ENCODE measurements at regions of chr2 and their contacts with region 1.

Region 1: DNA sequence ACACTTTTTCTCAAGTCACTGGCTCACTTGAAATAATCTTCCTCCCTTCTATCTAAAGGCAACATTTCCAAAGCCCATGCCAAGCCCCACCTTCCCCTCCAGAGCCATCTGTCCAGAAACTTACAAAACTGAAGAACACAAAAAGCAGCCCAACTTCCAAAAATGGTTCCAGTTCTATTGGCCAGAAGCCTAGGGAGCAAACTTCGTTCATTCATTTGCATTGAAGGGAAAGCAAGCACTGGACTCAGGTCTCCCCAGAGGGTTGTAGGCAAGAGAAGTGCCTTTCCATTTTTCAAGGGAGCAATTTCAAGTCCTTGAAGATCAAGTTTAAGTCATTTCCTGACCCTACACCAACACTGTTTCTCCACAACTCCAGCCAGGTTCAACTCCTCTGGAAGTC is 585.0 kb downstream of the BCL11A start:
- DNase-seq: no peak
- ATAC-seq: no peak
- H3K4me3 ChIP-seq: no peak overlapping the region
- H3K27ac ChIP-seq: no peak overlapping the region
- H3K4me1 ChIP-seq: no peaks in the 10 kb centered on the region
- H3K27me3 ChIP-seq: no peaks in the 10 kb centered on the region
- CTCF ChIP-seq: no peak
- EP300 ChIP-seq: no peak
- POLR2A ChIP-seq: no peak
- RAD21 ChIP-seq: no peak

Region 2: DNA sequence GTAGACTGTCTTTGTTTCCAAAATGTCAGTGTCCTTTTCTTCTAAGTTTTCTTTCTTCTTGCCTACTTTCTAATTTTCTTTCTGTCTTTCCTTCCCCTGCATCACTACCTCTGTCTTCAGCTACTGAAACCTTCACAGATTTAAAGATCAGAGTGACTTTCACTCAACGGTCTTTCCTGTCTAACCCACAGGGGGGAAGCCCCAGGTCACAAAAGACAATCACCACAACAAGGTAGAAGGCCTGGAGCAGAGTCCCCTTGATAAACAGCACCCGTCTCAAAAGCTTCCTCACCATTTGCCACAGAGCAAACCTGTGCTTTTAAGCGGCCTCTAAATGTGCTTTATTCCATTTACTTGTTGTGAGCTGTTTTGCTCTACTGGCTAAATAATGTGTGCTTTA is 80.4 kb before region 1 on chr2:
- CTCF ChIA-PET with region 1: no interaction called
- POLR2A ChIA-PET with region 1: no interaction called
- in situ Hi-C with region 1: no loop called
- intact Hi-C with region 1: no loop called
- DNase-seq: no peak
- ATAC-seq: no peak
- H3K4me3 ChIP-seq: no peak overlapping the region
- H3K27ac ChIP-seq: no peak overlapping the region
- H3K4me1 ChIP-seq: no peaks in the 10 kb centered on the region
- H3K27me3 ChIP-seq: no peaks in the 10 kb centered on the region
- CTCF ChIP-seq: no peak
- EP300 ChIP-seq: no peak
- POLR2A ChIP-seq: no peak
- RAD21 ChIP-seq: no peak

Region 3: GRCh38 chr2:59935005-59935404 is 33.4 kb before region 1 on chr2:
- CTCF ChIA-PET with region 1: no interaction called
- POLR2A ChIA-PET with region 1: no interaction called
- in situ Hi-C with region 1: no loop called
- intact Hi-C with region 1: loop called (anchors 1 kb)
- DNase-seq: no peak
- ATAC-seq: no peak
- H3K4me3 ChIP-seq: no peak overlapping the region
- H3K27ac ChIP-seq: no peak overlapping the region
- H3K4me1 ChIP-seq: no peaks in the 10 kb centered on the region
- H3K27me3 ChIP-seq: no peaks in the 10 kb centered on the region
- CTCF ChIP-seq: no peak
- EP300 ChIP-seq: no peak
- POLR2A ChIP-seq: no peak
- RAD21 ChIP-seq: no peak

Region 4: DNA sequence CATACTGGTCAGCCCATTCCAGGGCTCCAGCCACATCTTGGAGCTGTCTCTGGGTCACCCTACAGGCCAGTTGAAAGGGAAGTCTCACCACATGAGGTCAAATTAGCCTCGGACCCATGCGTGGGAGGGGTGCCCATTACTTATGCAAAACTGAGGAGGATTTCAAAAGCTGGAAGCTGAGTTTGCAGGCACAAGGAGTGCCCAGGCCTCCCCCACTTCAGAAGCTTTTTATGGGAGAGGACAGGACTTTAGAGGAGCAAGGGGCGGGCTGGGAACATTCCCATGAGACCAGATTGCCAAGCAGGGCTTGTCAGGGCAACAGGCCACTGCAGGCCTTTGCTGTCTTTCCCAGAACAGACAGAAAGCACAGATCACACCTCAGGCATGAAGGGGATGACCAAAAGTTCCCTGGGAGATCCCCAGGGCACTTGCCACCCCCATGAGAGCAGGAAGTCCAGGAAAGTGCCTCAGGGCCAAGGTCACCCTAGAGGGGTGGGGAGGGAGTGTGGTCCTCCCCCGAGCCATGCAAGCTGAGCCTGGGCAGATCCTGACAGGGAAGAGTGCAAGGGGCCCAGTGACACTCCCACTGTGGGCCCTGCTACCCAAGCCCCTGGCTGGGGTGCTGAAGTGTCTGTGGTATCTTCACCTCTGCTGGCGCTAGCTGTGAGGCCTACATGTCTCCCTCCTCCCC is 317.3 kb after region 1 on chr2:
- CTCF ChIA-PET with region 1: no interaction called
- POLR2A ChIA-PET with region 1: no interaction called
- in situ Hi-C with region 1: no loop called
- intact Hi-C with region 1: no loop called
- DNase-seq: no peak
- ATAC-seq: peak; percentile 62
- H3K4me3 ChIP-seq: no peak overlapping the region
- H3K27ac ChIP-seq: no peak overlapping the region
- H3K4me1 ChIP-seq: no peaks in the 10 kb centered on the region
- H3K27me3 ChIP-seq: no peaks in the 10 kb centered on the region
- CTCF ChIP-seq: no peak
- EP300 ChIP-seq: no peak
- POLR2A ChIP-seq: no peak
- RAD21 ChIP-seq: no peak

Region 5: GRCh38 chr2:61125123-61125710 is 1156.8 kb after region 1 on chr2:
- CTCF ChIA-PET with region 1: no interaction called
- POLR2A ChIA-PET with region 1: no interaction called
- in situ Hi-C with region 1: no loop called
- intact Hi-C with region 1: no loop called
- DNase-seq: no peak
- ATAC-seq: no peak
- H3K4me3 ChIP-seq: no peak overlapping the region
- H3K27ac ChIP-seq: no peak overlapping the region
- H3K4me1 ChIP-seq: no peaks in the 10 kb centered on the region
- H3K27me3 ChIP-seq: no peaks in the 10 kb centered on the region
- CTCF ChIP-seq: no peak
- EP300 ChIP-seq: no peak
- POLR2A ChIP-seq: no peak
- RAD21 ChIP-seq: no peak